ENCODE measurements at regions of chr21 and their contacts with region 1.

Region 1: DNA sequence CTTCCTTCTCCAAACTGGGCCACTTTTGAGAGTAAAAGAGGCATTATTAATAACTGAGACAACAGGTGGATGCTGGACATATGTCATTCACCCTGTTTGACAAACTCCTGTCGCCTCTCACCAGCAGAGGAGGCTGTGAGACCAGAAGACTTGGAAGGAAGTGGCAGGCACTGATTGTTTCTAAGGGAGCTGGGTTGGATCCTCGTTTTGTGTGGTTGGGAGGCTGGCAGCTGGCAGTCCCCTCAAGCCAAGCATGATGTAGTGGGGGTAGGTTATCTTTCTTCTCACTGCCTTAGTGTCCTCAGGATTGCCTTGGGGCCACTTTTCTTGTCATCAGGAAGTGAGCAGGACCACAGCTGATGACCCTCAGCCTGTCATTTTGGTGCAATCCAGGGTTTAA is 86.5 kb upstream of the KCNJ15 start:
- H3K4me3 ChIP-seq: no peak overlapping the region
- H3K27ac ChIP-seq: no peak overlapping the region
- H3K4me1 ChIP-seq: no peaks in the 10 kb centered on the region
- CTCF ChIP-seq: no peak

Region 2: DNA sequence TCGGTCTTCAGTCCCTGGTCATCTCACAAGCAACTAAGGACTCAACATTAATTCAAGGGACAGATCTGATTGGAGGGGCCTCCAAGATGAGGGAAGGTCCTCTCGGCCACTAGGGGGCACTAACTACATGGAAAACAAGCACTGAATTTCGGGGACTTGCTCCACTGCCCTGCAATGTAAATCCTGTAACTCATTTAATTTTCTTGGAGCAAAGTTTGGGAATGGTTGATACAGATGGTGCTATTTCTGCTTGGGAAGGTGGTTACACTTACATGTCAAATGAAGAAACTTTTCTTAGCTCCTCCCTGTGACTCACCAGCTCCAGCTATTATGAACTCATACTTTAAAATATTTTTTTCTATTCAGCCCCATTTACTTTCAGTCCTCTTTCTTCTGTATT is 10.9 kb before region 1 on chr21:
- CTCF ChIA-PET with region 1: interaction called, 61 read pairs
- POLR2A ChIA-PET with region 1: no interaction called
- H3K4me3 ChIP-seq: no peak overlapping the region
- H3K27ac ChIP-seq: no peak overlapping the region
- H3K4me1 ChIP-seq: no peaks in the 10 kb centered on the region
- CTCF ChIP-seq: peak; percentile 37

Region 3: DNA sequence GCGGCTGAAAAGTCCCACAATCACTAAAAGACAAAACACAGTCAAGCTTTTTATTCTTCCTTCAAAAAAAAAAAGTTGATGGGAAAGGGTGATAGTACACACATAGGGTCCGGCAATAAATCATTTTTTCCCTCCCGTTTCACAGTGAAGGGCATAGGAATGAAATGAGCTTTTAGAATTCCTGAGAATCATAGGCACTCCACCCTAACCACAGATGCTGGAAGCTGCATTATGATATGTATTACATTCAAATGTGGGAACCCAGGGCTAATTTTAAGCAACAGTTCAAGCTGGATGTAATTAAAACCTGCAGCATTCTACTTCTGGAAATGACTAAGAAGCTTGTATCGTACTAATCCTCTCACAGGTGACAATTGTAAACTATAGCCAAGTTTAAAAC is 10.8 kb after region 1 on chr21:
- CTCF ChIA-PET with region 1: interaction called, 18 read pairs
- POLR2A ChIA-PET with region 1: no interaction called
- H3K4me3 ChIP-seq: no peak overlapping the region
- H3K27ac ChIP-seq: no peak overlapping the region
- H3K4me1 ChIP-seq: no peaks in the 10 kb centered on the region
- CTCF ChIP-seq: no peak

Measured in HEK293 (cell line).